ENCODE measurements at regions of chr1 and their contacts with region 1.

Region 1: DNA sequence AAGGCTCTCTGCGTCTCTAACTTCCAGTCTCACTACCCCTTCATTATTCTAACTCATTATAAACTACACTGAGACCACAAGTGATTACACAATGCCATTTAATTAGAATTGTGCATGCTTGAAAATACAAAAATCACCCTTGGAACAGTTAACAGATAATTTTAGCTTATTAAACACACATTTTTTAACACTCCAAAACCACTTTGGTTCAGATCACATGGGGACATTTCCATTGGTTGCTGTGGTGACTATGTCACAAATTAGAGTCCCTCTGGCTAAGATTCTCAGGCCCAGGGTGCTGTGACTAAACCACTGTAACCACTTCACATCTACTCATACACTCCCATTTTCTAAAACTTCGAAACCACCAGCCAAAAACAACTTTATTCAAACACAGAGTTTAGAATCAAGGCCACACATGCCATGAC is 43.0 kb downstream of the JAK1 start:
- DNase-seq: no peak
- H3K4me3 Mint-ChIP-seq: peak overlapping the region; percentile 34
- H3K27ac Mint-ChIP-seq: peak overlapping the region; percentile 93
- H3K4me1 Mint-ChIP-seq: peaks cover 82% of the 10 kb centered on the region
- H3K27me3 Mint-ChIP-seq: no peaks in the 10 kb centered on the region

Region 2: DNA sequence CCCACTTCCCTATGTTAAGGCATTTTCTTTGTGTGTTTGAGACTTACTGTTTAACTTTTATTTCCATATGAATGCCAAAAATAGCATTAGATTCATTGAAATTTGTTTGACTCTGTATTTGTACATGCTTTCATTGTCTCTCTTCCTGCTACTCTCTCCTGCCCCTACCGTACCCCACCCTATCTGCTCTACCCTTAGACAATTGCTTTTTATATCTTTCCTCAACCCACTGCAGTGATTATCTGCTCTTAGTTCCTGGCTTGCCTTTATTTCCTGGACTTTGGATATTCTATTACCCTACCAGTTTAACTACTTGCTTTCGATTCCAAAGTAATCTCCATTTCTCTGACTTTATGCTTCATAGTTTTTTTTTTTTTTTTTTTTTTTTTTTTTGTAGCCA is 167.9 kb before region 1 on chr1:
- intact Hi-C with region 1: no loop called
- DNase-seq: no peak
- H3K4me3 Mint-ChIP-seq: no peak overlapping the region
- H3K27ac Mint-ChIP-seq: no peak overlapping the region
- H3K4me1 Mint-ChIP-seq: no peaks in the 10 kb centered on the region
- H3K27me3 Mint-ChIP-seq: peaks cover 15% of the 10 kb centered on the region

Region 3: GRCh38 chr1:64898107-64898845 is 25.0 kb before region 1 on chr1:
- intact Hi-C with region 1: loop called (anchors 1 kb)
- DNase-seq: no peak
- H3K4me3 Mint-ChIP-seq: no peak overlapping the region
- H3K27ac Mint-ChIP-seq: peak overlapping the region; percentile 3
- H3K4me1 Mint-ChIP-seq: peaks cover 71% of the 10 kb centered on the region
- H3K27me3 Mint-ChIP-seq: no peaks in the 10 kb centered on the region

Region 4: GRCh38 chr1:64940025-64940424 is 16.7 kb after region 1 on chr1:
- intact Hi-C with region 1: loop called (anchors 2 kb)
- DNase-seq: no peak
- H3K4me3 Mint-ChIP-seq: no peak overlapping the region
- H3K27ac Mint-ChIP-seq: no peak overlapping the region
- H3K4me1 Mint-ChIP-seq: peaks cover 38% of the 10 kb centered on the region
- H3K27me3 Mint-ChIP-seq: no peaks in the 10 kb centered on the region

Region 5: GRCh38 chr1:65002508-65003315 is 79.4 kb after region 1 on chr1:
- intact Hi-C with region 1: loop called (anchors 1 kb)
- DNase-seq: peak; percentile 58
- H3K4me3 Mint-ChIP-seq: peak overlapping the region; percentile 74
- H3K27ac Mint-ChIP-seq: peak overlapping the region; percentile 25
- H3K4me1 Mint-ChIP-seq: peaks cover 25% of the 10 kb centered on the region
- H3K27me3 Mint-ChIP-seq: peaks cover 23% of the 10 kb centered on the region

Region 6: GRCh38 chr1:65209005-65209885 is 285.9 kb after region 1 on chr1:
- intact Hi-C with region 1: loop called (anchors 2 kb)
- DNase-seq: no peak
- H3K4me3 Mint-ChIP-seq: no peak overlapping the region
- H3K27ac Mint-ChIP-seq: peak overlapping the region; percentile 20
- H3K4me1 Mint-ChIP-seq: peaks cover 76% of the 10 kb centered on the region
- H3K27me3 Mint-ChIP-seq: no peaks in the 10 kb centered on the region

Region 7: GRCh38 chr1:66282343-66282852 is 1359.1 kb after region 1 on chr1:
- intact Hi-C with region 1: loop called (anchors 5 kb)
- DNase-seq: peak; percentile 73
- H3K4me3 Mint-ChIP-seq: peak overlapping the region; percentile 62
- H3K27ac Mint-ChIP-seq: peak overlapping the region; percentile 88
- H3K4me1 Mint-ChIP-seq: peaks cover 90% of the 10 kb centered on the region
- H3K27me3 Mint-ChIP-seq: no peaks in the 10 kb centered on the region

Measured in activated T-helper 1 cell treated with anti-CD3 and anti-CD28 coated beads, Interleukin-12 subunit alpha, Interleukin-12 subunit beta, Interleukin-2, Interleukin-4 antibody, amounts not matched to agents 30 ng/mL and 10 ng/mL and 1 ng/mL, durations not matched to agents 14 hours and 24 hours and 36 hours (primary cell).